Prostate gland (tissue), 2 donors: ENCODE measurements at regions of chr7 and their contacts with region 1.

Region 1: DNA sequence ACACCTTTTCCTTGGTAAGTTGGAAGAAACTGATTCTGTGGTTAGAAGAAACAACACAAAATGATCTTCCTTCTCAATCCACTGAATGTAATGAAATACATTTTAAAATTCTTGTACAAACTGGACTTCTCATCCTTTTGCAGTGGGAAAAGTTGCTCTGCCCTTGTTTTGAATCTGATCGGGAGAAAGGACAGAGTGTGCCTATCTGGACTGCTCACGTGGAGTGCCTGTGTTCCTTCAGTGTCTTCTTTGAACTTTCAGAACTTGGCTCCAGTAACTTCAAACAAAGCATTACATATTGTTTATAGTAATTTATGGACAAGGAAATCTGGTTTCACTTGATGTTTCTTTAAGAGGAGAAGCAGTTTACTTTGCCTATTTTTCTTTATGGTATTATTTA is 17.1 kb downstream of the SLC26A3 start:
- DNase-seq: peak; percentile 78
- H3K4me3 ChIP-seq: no peak overlapping the region
- H3K27ac ChIP-seq: peak overlapping the region; percentile 74 to 91
- H3K4me1 ChIP-seq: peaks cover 13% of the 10 kb centered on the region
- H3K27me3 ChIP-seq: no peaks in the 10 kb centered on the region
- CTCF ChIP-seq: no peak
- POLR2A ChIP-seq: no peak

Region 2: DNA sequence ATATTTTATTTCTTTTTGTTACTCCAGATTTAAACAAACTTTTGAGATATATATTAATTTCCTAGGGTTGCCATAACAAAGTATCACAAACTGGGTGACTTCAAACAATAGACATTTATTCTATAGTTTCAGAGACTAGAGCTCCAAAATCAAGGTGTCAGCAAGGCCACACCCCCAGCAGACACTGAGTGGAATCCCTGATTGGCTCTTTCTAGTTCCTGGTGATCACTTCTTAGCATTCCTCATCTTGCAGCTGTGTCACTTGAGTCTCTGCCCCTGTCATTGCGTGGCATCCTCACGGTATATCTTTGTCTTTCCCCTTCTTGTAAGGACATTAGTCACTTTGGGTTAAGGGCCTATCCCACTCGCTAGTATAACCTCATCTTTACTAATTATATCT is 24.7 kb after region 1 on chr7:
- intact Hi-C with region 1: loop called (anchors 2 kb)
- DNase-seq: no peak
- H3K4me3 ChIP-seq: no peak overlapping the region
- H3K27ac ChIP-seq: peak overlapping the region in 1 of 2 donors; percentile 83
- H3K4me1 ChIP-seq: peaks cover 6% of the 10 kb centered on the region
- H3K27me3 ChIP-seq: no peaks in the 10 kb centered on the region
- CTCF ChIP-seq: no peak
- POLR2A ChIP-seq: no peak

Region 3: DNA sequence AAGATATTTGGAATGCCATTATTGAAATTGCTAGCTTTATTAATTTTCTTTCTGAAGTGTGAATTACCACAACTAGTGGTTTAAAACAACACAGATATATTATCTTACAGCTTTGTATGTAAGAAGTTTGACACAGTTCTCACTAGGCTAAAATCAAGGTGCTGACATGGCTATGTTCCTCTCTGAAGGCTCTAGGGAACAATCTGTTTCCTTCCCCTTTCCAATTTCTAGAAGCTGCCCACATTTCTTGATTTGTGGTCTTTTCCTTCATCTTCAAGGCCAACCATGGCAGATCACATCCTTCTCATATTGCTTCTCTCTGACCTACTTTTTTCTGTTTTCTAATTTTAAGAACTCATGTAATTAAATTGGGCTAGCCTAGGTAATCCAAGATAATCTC is 60.4 kb after region 1 on chr7:
- intact Hi-C with region 1: no loop called
- DNase-seq: no peak
- H3K4me3 ChIP-seq: no peak overlapping the region
- H3K27ac ChIP-seq: no peak overlapping the region
- H3K4me1 ChIP-seq: no peaks in the 10 kb centered on the region
- H3K27me3 ChIP-seq: no peaks in the 10 kb centered on the region
- CTCF ChIP-seq: no peak
- POLR2A ChIP-seq: no peak